ENCODE measurements at regions of chr2 and their contacts with region 1.

Region 1: DNA sequence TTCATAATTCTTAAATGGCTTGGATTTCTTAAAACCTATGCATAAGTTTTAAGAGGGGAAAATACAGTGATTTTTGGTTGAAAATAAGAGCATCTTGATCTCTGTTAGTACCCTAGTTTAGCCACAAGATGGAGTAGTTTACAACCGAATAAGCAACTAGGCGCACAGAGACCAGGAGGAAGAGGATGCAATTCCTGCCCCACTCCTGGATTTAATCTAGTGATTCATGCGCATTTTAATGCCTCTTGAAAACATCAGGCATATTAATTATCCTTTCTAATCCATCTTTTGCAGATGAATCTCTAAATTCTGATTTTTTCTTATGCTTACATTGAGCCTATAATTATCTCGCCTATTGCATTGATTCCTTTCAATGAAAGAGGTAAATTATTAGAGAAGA is 76.7 kb downstream of the MRPS9 start:
- DNase-seq: peak; percentile 67 to 73 (median 69)
- ATAC-seq: peak; percentile 77
- H3K4me3 ChIP-seq: no peak overlapping the region
- H3K27ac ChIP-seq: no peak overlapping the region
- H3K4me1 ChIP-seq: peaks cover 0 to 5% of the 10 kb centered on the region in 2 experiments; a peak in 2 of 5 replicates
- H3K27me3 ChIP-seq: no peaks in the 10 kb centered on the region
- CTCF ChIP-seq: peak; percentile 67 to 82 (median 67); a peak in 5 of 6 replicates
- EP300 ChIP-seq: no peak
- POLR2A ChIP-seq: no peak
- RAD21 ChIP-seq: peak; percentile 89 to 90

Region 2: DNA sequence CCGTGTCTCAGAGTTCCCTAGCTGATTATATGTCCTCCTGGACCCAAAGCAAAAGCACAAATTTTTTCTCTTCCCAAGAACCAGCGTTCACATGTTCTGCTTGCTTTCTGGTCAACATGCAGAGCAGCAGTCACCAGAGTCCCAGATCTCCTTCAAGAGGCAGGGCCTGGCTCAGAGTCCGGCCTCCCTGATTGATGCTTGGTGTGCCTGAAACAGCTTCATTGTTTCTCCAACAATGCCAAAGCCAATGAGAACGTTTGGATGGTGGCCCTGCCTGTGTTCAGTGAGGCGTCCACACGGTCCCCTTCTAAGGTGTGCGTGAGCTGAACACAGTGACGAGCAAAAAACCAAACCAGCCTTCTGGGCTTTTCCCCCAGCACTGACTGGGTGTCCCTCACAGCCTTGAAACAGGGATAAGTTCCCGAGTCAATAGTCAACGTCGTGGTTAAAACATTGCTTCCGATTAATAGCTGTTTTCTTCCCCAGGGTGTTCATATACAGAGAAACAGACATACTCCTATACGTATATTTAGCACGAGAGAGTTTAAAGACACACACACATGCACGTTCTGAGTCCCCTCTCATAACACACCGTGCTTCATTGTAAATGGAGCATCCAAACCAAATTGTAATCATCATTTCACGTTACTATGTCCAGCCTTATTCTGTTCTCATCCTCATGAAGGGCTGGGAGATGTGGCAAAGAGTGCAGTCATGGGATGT is 280.0 kb before region 1 on chr2:
- CTCF ChIA-PET with region 1: no interaction called
- POLR2A ChIA-PET with region 1: no interaction called
- in situ Hi-C with region 1: no loop called
- intact Hi-C with region 1: no loop called
- DNase-seq: no peak
- ATAC-seq: no peak
- H3K4me3 ChIP-seq: no peak overlapping the region
- H3K27ac ChIP-seq: no peak overlapping the region
- H3K4me1 ChIP-seq: no peaks in the 10 kb centered on the region
- H3K27me3 ChIP-seq: no peaks in the 10 kb centered on the region
- CTCF ChIP-seq: no peak
- EP300 ChIP-seq: no peak
- POLR2A ChIP-seq: no peak
- RAD21 ChIP-seq: no peak

Region 3: DNA sequence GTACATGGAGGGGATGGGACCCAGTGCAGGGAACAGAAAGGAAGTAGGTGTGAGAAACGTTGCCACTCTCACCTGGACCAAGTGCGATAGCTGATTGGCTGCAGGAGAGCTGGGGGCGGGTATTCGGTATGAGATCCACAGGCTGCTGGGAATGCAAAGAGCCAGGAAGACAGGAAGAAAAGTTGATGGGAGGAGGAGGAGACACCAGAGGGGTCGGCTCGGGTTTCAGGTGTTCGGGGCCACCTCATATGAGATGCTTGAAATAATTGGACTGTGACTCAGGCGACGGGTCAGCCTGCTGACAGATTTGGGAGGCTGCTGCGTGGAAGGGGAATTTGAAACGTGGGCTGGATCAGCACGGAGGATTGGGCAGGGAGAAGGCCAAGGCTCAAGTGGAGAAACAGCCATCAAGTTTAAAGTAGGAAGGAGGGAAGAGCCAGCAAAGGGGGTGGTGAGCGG is 11.6 kb before region 1 on chr2:
- CTCF ChIA-PET with region 1: no interaction called
- POLR2A ChIA-PET with region 1: no interaction called
- in situ Hi-C with region 1: no loop called
- intact Hi-C with region 1: no loop called
- DNase-seq: no peak
- ATAC-seq: peak; percentile 23; the same call in 2 of the 3 replicates
- H3K4me3 ChIP-seq: no peak overlapping the region
- H3K27ac ChIP-seq: no peak overlapping the region
- H3K4me1 ChIP-seq: peaks cover 0 to 2% of the 10 kb centered on the region in 2 experiments; a peak in 2 of 5 replicates
- H3K27me3 ChIP-seq: no peaks in the 10 kb centered on the region
- CTCF ChIP-seq: no peak
- EP300 ChIP-seq: no peak
- POLR2A ChIP-seq: no peak
- RAD21 ChIP-seq: no peak

Region 4: DNA sequence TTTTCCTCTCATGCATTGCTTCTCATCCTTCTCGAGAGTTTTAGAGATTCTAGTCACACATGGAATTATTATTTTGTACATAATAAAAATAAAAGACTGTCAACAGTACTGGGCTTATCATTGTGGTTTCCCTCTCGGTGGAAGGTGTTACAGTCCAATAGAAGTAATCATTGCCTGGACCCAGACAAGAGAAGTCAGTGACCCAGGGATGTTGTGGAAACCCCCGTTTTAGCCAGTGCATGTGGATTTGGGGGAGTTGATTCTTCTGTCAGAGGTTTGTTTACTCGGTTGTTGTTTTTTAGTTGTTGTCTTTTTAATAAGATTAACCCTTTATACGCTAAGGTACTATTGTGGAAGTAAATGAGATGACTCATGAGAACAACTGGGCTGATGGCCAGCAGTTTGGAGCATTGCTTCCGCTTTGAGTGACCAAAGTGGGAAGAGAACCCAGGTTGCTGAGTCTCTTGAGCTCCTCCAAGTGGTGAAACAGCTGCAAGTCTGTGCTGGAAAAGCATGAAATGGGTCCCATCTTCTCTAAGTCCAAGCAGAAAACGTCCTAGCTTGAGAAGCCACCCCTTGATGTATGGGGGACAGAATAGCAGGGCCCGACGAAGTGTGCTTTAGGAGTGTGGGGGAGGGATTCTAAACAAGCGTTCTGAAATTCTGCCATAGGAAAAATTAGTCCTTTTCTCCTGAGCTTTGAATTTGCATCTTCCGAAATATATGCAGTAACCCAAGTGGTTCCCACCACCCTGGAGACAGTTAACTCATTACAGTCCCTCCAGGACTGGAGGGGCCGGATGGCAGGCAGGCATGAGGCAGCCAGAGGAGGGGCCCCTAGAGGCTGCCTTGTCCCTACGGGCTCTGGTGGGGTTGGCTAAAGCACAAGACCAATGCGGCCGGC is 65.2 kb after region 1 on chr2:
- CTCF ChIA-PET with region 1: interaction called, 3 read pairs
- POLR2A ChIA-PET with region 1: no interaction called
- in situ Hi-C with region 1: no loop called
- intact Hi-C with region 1: loop called (anchors 1 kb)
- DNase-seq: peak; percentile 58 to 78 (median 64)
- ATAC-seq: peak; percentile 92
- H3K4me3 ChIP-seq: no peak overlapping the region
- H3K27ac ChIP-seq: no peak overlapping the region
- H3K4me1 ChIP-seq: peaks cover 3% of the 10 kb centered on the region in 2 experiments; a peak in 1 of 5 replicates
- H3K27me3 ChIP-seq: peaks cover 23 to 57% of the 10 kb centered on the region in 2 experiments
- CTCF ChIP-seq: peak; percentile 66 to 79 (median 78)
- EP300 ChIP-seq: no peak
- POLR2A ChIP-seq: no peak
- RAD21 ChIP-seq: peak; percentile 45 to 63

Region 5: DNA sequence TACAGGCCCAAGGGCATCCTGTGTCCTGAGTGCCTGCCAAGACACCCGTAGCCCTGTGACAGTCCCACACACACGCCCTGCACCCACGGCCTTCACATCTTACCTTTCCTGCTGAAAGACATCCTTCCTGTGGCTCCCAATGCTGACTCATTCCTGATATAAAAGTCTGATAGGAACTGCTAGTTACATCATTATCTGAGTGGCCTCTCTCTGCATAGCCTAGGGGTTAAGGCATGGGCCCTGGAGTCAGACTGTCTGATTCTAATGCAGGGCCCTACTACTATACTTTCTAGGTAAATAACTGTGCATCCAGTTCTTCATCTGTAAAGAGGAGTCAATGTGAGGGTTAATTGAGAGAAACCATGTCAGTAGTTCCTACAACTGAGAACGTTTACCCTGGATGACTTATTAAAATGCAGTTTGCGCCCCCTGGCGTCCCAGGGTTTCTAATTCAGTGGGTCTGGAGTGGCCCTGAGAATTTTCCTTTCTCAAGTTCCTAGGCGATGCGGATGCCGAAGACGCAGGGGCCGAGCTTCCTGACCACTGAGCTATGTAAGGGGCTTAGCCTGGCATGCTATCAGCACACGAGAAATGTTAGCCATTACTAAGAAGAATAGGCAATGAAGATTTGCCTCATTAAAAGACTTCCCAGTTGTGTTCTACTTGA is 121.0 kb after region 1 on chr2:
- CTCF ChIA-PET with region 1: interaction called, 18 read pairs
- POLR2A ChIA-PET with region 1: interaction called, 3 read pairs
- in situ Hi-C with region 1: loop called (anchors 5 kb)
- intact Hi-C with region 1: loop called (anchors 1 kb)
- DNase-seq: peak; percentile 57 to 87 (median 57)
- ATAC-seq: peak; percentile 88
- H3K4me3 ChIP-seq: no peak overlapping the region
- H3K27ac ChIP-seq: no peak overlapping the region
- H3K4me1 ChIP-seq: peaks cover 2 to 12% of the 10 kb centered on the region in 2 experiments; a peak in 2 of 5 replicates
- H3K27me3 ChIP-seq: peaks cover 22 to 52% of the 10 kb centered on the region in 2 experiments
- CTCF ChIP-seq: peak; percentile 73 to 83 (median 82)
- EP300 ChIP-seq: 0 out of 2 replicates have a peak, but pooled peaks have one; percentile 10
- POLR2A ChIP-seq: no peak
- RAD21 ChIP-seq: peak; percentile 64 to 81

Region 6: DNA sequence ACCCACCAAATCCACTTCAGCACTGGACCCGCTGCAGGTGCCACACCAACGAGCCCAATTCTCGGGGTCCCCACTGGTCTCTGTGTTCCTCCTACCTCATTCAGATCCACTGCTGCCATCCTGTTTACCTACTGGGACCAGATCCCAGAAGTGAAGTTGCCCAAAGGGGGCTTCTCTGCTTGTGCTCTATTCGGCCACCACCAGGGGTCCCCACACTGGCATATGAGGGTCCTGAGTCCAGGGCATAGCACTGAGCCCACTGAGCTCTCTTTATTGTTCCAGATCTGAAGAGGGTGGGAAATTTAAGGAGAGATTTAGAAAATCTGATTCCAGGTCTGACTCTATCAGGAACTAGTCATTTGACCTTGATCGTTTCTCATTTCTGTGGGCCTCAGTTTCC is 129.4 kb after region 1 on chr2:
- CTCF ChIA-PET with region 1: no interaction called
- POLR2A ChIA-PET with region 1: interaction called, 3 read pairs
- in situ Hi-C with region 1: loop called (anchors 5 kb)
- intact Hi-C with region 1: no loop called
- DNase-seq: peak in 3 of 4 experiments; percentile 28 to 59 (median 56)
- ATAC-seq: peak; percentile 48
- H3K4me3 ChIP-seq: no peak overlapping the region
- H3K27ac ChIP-seq: no peak overlapping the region
- H3K4me1 ChIP-seq: peaks cover 0 to 9% of the 10 kb centered on the region in 2 experiments; a peak in 2 of 5 replicates
- H3K27me3 ChIP-seq: peaks cover 19 to 37% of the 10 kb centered on the region in 2 experiments; a peak in 4 of 5 replicates
- CTCF ChIP-seq: peak; percentile 16 to 51 (median 26); a peak in 4 of 6 replicates
- EP300 ChIP-seq: no peak
- POLR2A ChIP-seq: no peak
- RAD21 ChIP-seq: no peak

Region 7: GRCh38 chr2:105294844-105295481 is 180.4 kb after region 1 on chr2:
- CTCF ChIA-PET with region 1: interaction called, 15 read pairs
- POLR2A ChIA-PET with region 1: interaction called, 3 read pairs
- in situ Hi-C with region 1: loop called (anchors 5 kb)
- intact Hi-C with region 1: loop called (anchors 1 kb)
- DNase-seq: peak; percentile 59 to 67 (median 66)
- ATAC-seq: peak; percentile 98
- H3K4me3 ChIP-seq: no peak overlapping the region
- H3K27ac ChIP-seq: no peak overlapping the region
- H3K4me1 ChIP-seq: no peaks in the 10 kb centered on the region
- H3K27me3 ChIP-seq: no peaks in the 10 kb centered on the region
- CTCF ChIP-seq: peak; percentile 65 to 73 (median 73)
- EP300 ChIP-seq: no peak
- POLR2A ChIP-seq: no peak
- RAD21 ChIP-seq: peak; percentile 36 to 59

Region 8: GRCh38 chr2:105521205-105521604 is 406.7 kb after region 1 on chr2:
- CTCF ChIA-PET with region 1: no interaction called
- POLR2A ChIA-PET with region 1: no interaction called
- in situ Hi-C with region 1: loop called (anchors 25 kb)
- intact Hi-C with region 1: loop called (anchors 10 kb)
- DNase-seq: peak in 3 of 4 experiments; percentile 18 to 30 (median 23)
- ATAC-seq: no peak
- H3K4me3 ChIP-seq: no peak overlapping the region
- H3K27ac ChIP-seq: no peak overlapping the region
- H3K4me1 ChIP-seq: peaks cover 10 to 11% of the 10 kb centered on the region in 2 experiments; a peak in 4 of 5 replicates
- H3K27me3 ChIP-seq: no peaks in the 10 kb centered on the region; a peak in 1 of 5 replicates
- CTCF ChIP-seq: peak; percentile 28 to 78 (median 51); a peak in 3 of 6 replicates
- EP300 ChIP-seq: no peak
- POLR2A ChIP-seq: no peak
- RAD21 ChIP-seq: peak; percentile 88

Region 9: DNA sequence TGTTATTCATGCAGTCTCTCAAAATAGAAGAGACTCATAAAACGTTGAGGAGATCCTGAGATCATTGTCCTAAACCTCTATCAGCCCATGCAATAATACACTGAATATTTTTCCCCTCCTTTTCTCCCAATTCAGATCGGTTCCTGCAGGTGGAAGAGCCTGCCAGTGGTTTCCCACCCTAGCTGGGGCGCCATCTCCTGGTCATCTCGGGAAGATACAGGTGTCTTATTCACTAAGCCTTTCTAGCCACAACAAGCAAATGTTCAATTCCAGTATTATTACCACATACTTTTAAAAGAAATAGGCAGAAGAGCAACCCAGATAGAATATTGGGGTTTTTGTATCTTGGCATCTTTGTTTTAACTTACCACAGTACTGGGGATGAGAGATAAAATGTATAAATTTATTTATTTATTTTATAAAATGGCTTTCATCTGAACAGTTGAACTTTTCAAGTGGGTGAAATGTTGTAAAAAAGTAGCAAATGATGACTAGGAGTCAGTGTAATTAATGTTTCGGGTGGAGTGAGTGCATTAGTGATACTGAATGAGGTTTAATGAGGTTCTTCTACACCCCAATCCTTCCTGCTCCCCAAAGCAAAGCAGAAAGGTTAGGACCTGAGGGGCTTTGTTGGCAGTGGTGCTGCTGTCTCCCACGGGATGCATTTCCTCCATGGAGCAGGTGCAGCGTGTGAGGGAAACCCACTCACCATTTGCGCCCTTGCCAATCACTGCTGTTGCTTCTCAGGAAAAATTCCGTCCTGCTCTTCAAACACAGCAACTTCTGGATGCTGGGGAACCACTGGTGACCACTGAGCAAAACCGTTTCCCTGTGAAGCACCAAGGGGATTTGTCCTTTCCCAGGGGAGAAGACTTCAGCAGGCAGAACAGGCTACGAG is 431.4 kb after region 1 on chr2:
- CTCF ChIA-PET with region 1: interaction called, 3 read pairs
- POLR2A ChIA-PET with region 1: no interaction called
- in situ Hi-C with region 1: loop called (anchors 25 kb)
- intact Hi-C with region 1: no loop called
- DNase-seq: peak; percentile 77 to 80 (median 80)
- ATAC-seq: peak; percentile 96
- H3K4me3 ChIP-seq: no peak overlapping the region
- H3K27ac ChIP-seq: no peak overlapping the region
- H3K4me1 ChIP-seq: no peaks in the 10 kb centered on the region
- H3K27me3 ChIP-seq: peaks cover 25 to 51% of the 10 kb centered on the region in 2 experiments
- CTCF ChIP-seq: peak; percentile 82 to 97 (median 87)
- EP300 ChIP-seq: no peak
- POLR2A ChIP-seq: no peak
- RAD21 ChIP-seq: peak; percentile 67 to 79